ENCODE measurements at regions of chr5 and their contacts with region 1.

Region 1: GRCh38 chr5:10627160-10627701 is 63.4 kb downstream of the ANKRD33B start:
- DNase-seq: peak in 3 of 5 donors; percentile 43 to 64 (median 61)
- H3K4me3 ChIP-seq: peak overlapping the region; percentile 41 to 58 (median 48)
- H3K27ac ChIP-seq: peak overlapping the region; percentile 18 to 56
- H3K4me1 ChIP-seq: peaks cover 0 to 5% (median 4%) of the 10 kb centered on the region in 3 donors
- H3K27me3 ChIP-seq: no peaks in the 10 kb centered on the region
- CTCF ChIP-seq: no peak

Region 2: DNA sequence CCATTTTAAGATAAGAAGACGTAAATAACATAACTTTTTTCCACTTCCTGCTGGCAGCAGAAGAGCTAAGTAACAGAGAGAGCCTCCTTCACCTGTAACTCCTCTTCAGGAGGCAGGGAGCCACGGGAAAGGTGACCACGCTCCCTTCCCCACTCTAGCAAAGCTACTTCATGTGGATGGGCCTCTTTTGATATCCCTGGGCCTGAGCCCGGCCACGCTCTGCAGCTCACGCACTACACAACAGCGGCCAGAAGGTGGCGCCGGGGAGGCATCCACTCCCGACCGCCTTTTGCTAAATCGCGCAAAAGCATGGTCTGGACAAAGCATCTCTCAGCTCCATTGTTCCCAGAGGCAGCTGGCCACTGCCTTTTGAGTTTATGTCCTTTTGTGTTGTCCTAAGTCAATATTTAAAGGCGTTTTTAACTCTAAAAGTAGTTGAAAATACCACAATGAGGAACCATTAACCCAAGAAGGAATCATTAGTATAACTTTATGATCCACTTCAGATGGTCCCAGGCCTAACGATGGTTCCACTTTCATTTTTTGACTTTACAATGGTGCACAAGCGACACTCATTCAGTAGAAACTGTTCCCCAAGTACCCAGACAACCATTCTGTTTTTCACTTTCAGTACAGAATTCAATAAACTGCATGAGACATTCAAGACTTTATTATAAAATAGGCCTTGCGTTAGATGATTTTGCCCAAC is 343.1 kb before region 1 on chr5:
- intact Hi-C with region 1: loop called (anchors 10 kb)
- DNase-seq: peak; percentile 87 to 92 (median 91)
- H3K4me3 ChIP-seq: no peak overlapping the region
- H3K27ac ChIP-seq: no peak overlapping the region
- H3K4me1 ChIP-seq: peaks cover 0 to 10% (median 10%) of the 10 kb centered on the region in 3 donors
- H3K27me3 ChIP-seq: no peaks in the 10 kb centered on the region
- CTCF ChIP-seq: peak; percentile 88

Region 3: DNA sequence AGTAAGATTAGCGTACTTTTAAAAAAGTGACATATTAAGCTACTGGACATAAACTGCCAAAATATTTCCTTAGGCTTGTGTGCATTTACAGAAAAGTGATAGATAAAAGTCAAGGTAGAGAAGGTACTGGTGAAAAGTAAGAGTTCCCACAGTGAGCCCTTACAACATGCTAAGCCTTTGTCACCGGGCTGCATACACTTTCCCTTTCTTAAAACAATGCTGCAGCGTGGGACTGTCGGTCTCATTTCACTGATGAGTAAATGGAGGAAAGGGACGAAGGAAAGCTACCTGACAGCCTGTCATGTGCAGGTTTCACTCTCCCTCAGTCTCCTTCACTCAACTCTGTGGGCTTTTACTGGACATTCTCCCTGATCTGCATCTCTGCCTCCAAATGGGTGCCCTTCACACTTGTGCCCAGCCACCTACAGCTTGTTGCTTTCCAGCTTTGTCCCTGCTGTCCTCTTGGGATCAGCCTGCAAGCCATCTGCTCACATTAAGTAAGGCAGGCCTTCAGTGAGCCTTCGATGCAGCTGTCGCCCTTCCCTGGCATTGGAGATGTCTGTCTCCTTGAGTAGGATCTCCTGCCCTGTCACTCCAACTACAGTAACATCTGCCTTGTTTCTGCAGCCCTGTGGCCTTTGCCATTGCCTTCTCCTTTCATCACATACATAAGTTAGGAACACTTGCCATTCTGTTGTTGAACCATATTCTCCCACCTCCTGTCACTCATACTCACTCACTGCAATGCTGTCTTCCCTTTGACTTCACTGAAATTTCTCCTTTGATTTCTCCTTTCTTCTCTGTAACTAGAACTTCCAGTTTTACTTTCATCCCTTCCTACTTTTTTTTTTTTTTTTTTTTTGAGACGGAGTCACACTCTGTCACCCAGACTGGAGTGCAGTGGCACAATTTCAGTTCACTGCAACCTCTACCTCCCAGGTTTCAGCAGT is 194.9 kb before region 1 on chr5:
- intact Hi-C with region 1: no loop called
- DNase-seq: no peak
- H3K4me3 ChIP-seq: no peak overlapping the region
- H3K27ac ChIP-seq: no peak overlapping the region
- H3K4me1 ChIP-seq: no peaks in the 10 kb centered on the region
- H3K27me3 ChIP-seq: no peaks in the 10 kb centered on the region
- CTCF ChIP-seq: no peak

Region 4: GRCh38 chr5:10457682-10458574 is 169.3 kb before region 1 on chr5:
- intact Hi-C with region 1: loop called (anchors 5 kb)
- DNase-seq: no peak
- H3K4me3 ChIP-seq: no peak overlapping the region
- H3K27ac ChIP-seq: peak overlapping the region in 1 of 2 donors; percentile 34
- H3K4me1 ChIP-seq: peaks cover 0 to 12% (median 4%) of the 10 kb centered on the region in 3 donors
- H3K27me3 ChIP-seq: no peaks in the 10 kb centered on the region
- CTCF ChIP-seq: no peak

Region 5: GRCh38 chr5:10934783-10935355 is 307.6 kb after region 1 on chr5:
- intact Hi-C with region 1: no loop called
- DNase-seq: peak in 2 of 5 donors; percentile 6 to 26
- H3K4me3 ChIP-seq: no peak overlapping the region
- H3K27ac ChIP-seq: no peak overlapping the region
- H3K4me1 ChIP-seq: no peaks in the 10 kb centered on the region
- H3K27me3 ChIP-seq: no peaks in the 10 kb centered on the region
- CTCF ChIP-seq: no peak